ENCODE measurements at regions of chr17 and their contacts with region 1.

Region 1: DNA sequence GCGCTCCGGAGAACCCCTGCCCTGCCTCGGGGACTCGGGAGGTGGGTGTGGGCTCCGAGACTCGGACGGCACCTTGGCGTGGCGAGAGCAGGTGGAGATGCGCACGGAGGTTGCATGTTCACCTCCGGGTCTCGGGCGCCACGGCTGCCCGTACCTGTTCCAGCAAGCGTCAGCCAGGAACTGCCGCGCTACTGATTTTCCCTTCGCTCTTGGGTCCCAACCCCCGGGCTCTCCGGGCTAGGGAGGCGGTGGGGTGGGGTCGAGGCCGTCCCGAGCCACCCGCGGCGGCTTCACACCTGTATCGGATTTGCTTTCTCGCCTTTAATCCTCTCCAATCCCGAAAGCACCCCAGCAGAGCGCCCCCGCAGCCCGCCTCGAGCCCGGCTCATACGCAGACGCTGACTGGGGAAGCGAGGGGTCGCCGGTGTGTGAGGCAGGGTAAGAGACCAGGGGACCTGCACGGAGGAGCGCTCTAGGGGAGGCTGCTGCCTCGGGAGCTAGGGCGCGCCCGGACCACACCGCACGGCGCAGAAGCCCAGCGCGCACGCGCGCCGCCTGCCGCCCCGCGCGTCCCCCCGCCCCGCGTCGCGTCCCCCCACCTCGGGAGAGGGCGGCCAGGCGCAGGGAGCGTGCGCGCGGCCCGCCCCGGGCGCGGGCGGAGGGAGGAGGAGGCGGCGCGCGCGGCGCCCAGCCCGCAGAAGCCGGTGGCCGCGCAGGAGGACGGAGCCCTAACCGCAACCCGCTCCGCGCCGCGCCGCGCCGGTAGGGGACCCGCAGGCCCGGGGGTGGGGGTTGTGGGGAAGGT is at the start of gene DUSP14:
- DNase-seq: peak; percentile 80
- H3K4me3 ChIP-seq: peak within 1 kb of the TSS; percentile 81 to 85
- H3K27ac ChIP-seq: peak within 1 kb of the TSS; percentile 83 to 90
- H3K4me1 ChIP-seq: peaks cover 6% of the 10 kb centered on the region
- H3K27me3 ChIP-seq: no peaks in the 10 kb centered on the region
- CTCF ChIP-seq: no peak
- POLR2A ChIP-seq: peak; percentile 65
- total RNA-seq, gene DUSP14: 28.7 to 31.0 TPM

Region 2: GRCh38 chr17:37406635-37407461 is 82.6 kb before region 1 on chr17 and contains the starts of genes ACACA and TADA2A:
- intact Hi-C with region 1: loop called (anchors 2 kb)
- DNase-seq: peak; percentile 69
- H3K4me3 ChIP-seq: peak within 1 kb of the TSS; percentile 67 to 84
- H3K27ac ChIP-seq: peak within 1 kb of the TSS; percentile 85 to 88
- H3K4me1 ChIP-seq: no peaks in the 10 kb centered on the region
- H3K27me3 ChIP-seq: no peaks in the 10 kb centered on the region
- CTCF ChIP-seq: peak in 2 of 4 experiments; percentile 19 to 39
- POLR2A ChIP-seq: peak; percentile 58
- total RNA-seq, gene ACACA: 54.2 to 71.3 TPM
- total RNA-seq, gene TADA2A: 13.0 to 29.7 TPM

Measured in prostate gland (tissue), 2 donors.